Naive thymus-derived CD4-positive, alpha-beta T cell (primary cell): ENCODE measurements at regions of chr6 and their contacts with region 1.

Region 1: GRCh38 chr6:146905181-146905704 is 299.0 kb upstream of the STXBP5 start:
- DNase-seq: no peak
- ATAC-seq: no peak
- H3K4me3 ChIP-seq: no peak overlapping the region
- H3K4me3 Mint-ChIP-seq: no peak overlapping the region
- H3K27ac ChIP-seq: no peak overlapping the region
- H3K27ac Mint-ChIP-seq: no peak overlapping the region
- H3K4me1 ChIP-seq: no peaks in the 10 kb centered on the region
- H3K4me1 Mint-ChIP-seq: peaks cover 0 to 2% (median 0%) of the 10 kb centered on the region in 7 donors
- H3K27me3 ChIP-seq: peaks cover 0 to 5% of the 10 kb centered on the region in 2 donors
- H3K27me3 Mint-ChIP-seq: no peaks in the 10 kb centered on the region

Region 2: DNA sequence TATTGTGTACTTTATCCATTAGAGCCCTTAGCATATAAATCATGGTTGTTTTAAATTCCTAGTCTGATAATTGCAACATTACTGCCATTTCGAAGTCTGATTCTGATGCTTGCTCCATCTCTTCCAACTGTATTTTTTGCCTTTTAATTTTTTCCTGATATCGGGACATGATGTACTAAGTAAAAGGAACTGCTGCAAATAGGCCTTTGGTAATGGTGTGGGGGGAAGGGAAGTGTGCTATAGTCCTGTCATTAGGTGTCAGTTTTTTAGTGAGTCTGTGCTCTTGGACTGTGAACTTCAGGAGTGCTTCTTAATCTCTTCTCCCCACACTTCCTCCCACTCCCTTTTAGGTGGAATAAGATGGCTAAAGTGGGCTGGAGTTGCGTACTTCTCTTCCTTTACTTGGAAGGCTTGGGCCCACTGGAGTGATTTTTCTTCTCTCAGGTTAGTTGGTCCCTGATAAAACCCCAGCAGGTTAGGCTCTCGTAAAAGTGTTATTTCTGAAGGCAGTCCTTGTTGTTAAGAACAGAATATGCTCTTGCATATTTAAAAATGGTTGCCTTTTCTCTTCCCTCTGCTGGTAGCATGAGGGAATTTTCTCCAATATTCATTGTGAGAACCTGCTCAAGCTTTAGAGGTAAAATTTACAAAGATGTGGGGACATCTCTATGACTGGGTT is 317.1 kb after region 1 on chr6:
- CTCF ChIA-PET with region 1: no interaction called
- POLR2A ChIA-PET with region 1: no interaction called
- intact Hi-C with region 1: loop called in 1 of 2 experiments (anchors 1 kb)
- DNase-seq: peak in 6 of 9 donors; percentile 21 to 45 (median 36)
- ATAC-seq: peak; percentile 61
- H3K4me3 ChIP-seq: no peak overlapping the region
- H3K4me3 Mint-ChIP-seq: peak overlapping the region in 2 of 10 donors; percentile 29 to 35
- H3K27ac ChIP-seq: no peak overlapping the region
- H3K27ac Mint-ChIP-seq: peak overlapping the region in 6 of 9 donors; percentile 11 to 64 (median 42)
- H3K4me1 ChIP-seq: peaks cover 0 to 5% of the 10 kb centered on the region in 2 donors
- H3K4me1 Mint-ChIP-seq: peaks cover 16 to 74% (median 65%) of the 10 kb centered on the region in 7 donors
- H3K27me3 ChIP-seq: no peaks in the 10 kb centered on the region
- H3K27me3 Mint-ChIP-seq: no peaks in the 10 kb centered on the region

Region 3: DNA sequence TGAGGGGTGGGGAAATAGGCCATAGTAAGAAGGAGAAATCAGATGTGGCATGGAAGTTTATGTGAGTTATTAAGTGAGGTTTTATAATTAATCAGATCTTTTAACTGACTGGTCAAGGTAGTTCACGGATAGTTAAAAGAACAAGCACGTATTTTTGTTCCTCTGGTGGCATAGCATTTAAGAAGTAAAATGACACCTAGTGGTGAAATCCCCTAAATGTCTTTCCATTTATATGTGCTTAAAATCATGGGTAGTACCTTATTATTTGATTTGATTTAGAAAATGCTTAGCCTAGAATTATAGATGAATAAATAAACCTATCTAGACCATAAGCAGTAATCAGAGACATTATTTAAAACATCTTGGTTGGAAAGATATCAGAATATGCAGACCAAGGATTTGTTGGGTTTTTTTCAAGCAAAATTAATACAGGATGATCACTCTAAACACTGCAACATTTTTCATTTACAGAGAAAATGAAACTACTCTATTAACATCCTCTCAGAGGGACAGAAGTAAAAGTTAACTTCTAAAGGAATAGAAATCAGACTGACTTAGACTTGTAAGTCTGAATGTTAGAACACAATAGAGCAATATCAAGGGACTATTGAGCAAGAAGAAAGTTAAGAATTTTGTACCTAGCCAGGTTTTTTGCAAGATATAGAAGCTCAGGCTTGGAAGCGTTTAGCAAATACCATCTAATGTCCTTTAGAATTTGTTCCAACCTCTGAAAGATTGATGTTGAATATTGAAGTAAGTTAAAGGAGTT is 380.0 kb after region 1 on chr6:
- CTCF ChIA-PET with region 1: interaction called, 15 read pairs
- POLR2A ChIA-PET with region 1: no interaction called
- intact Hi-C with region 1: loop called in 1 of 2 experiments (anchors 1 kb)
- DNase-seq: peak in 5 of 9 donors; percentile 16 to 34 (median 21)
- ATAC-seq: peak; percentile 52
- H3K4me3 ChIP-seq: no peak overlapping the region
- H3K4me3 Mint-ChIP-seq: peak overlapping the region in 2 of 10 donors; percentile 6 to 38
- H3K27ac ChIP-seq: no peak overlapping the region
- H3K27ac Mint-ChIP-seq: peak overlapping the region in 5 of 9 donors; percentile 0 to 76 (median 11)
- H3K4me1 ChIP-seq: no peaks in the 10 kb centered on the region
- H3K4me1 Mint-ChIP-seq: peaks cover 9 to 32% (median 25%) of the 10 kb centered on the region in 7 donors
- H3K27me3 ChIP-seq: no peaks in the 10 kb centered on the region
- H3K27me3 Mint-ChIP-seq: no peaks in the 10 kb centered on the region

Region 4: DNA sequence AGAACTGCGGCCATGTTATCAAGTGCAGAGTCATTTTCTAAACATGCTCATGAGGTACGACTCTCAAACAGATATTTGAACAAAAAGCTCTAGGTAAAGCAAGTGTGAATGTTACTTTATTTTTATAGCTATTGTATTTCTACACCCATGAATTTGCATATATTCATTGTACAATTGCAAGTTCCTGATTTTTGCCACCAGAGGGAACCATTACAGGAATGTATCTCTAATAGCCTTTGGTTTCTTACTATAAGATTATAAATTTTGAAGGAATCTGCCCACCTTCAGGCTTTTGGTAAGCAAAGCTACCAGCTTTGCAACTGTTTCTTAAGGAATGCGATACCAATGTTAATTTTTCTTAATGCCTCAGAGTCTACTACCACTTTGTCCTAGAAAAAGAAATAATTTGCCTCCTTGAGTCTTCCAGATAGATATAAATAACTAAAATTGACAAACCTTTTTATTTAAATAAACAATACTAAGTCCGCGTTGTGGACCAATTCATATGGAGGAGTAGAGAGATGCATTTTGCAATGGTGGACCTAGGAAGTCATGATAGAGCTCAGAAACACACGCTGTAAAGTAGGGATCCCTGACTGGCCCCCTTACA is 477.8 kb after region 1 on chr6:
- CTCF ChIA-PET with region 1: no interaction called
- POLR2A ChIA-PET with region 1: no interaction called
- intact Hi-C with region 1: loop called in 1 of 2 experiments (anchors 1 kb)
- DNase-seq: peak in 1 of 9 donors; percentile 5
- ATAC-seq: no peak
- H3K4me3 ChIP-seq: no peak overlapping the region
- H3K4me3 Mint-ChIP-seq: no peak overlapping the region
- H3K27ac ChIP-seq: no peak overlapping the region
- H3K27ac Mint-ChIP-seq: peak overlapping the region in 1 of 9 donors; percentile 59
- H3K4me1 ChIP-seq: no peaks in the 10 kb centered on the region
- H3K4me1 Mint-ChIP-seq: peaks cover 0 to 5% (median 0%) of the 10 kb centered on the region in 7 donors
- H3K27me3 ChIP-seq: no peaks in the 10 kb centered on the region
- H3K27me3 Mint-ChIP-seq: no peaks in the 10 kb centered on the region